ENCODE measurements at regions of chr12 and their contacts with region 1.

Region 1: GRCh38 chr12:58346032-58346632 is 404.8 kb downstream of the ATP23 start:
- DNase-seq: no peak
- H3K4me3 ChIP-seq: no peak overlapping the region
- H3K27ac ChIP-seq: no peak overlapping the region
- H3K4me1 ChIP-seq: no peaks in the 10 kb centered on the region
- H3K27me3 ChIP-seq: peaks cover 6% of the 10 kb centered on the region
- CTCF ChIP-seq: peak; percentile 58 to 92 (median 80)
- POLR2A ChIP-seq: no peak

Region 2: GRCh38 chr12:58443273-58443980 is 97.3 kb after region 1 on chr12:
- intact Hi-C with region 1: loop called in 1 of 2 experiments (anchors 10 kb)
- DNase-seq: peak in 6 of 7 donors; percentile 14 to 61 (median 28)
- H3K4me3 ChIP-seq: no peak overlapping the region
- H3K27ac ChIP-seq: no peak overlapping the region
- H3K4me1 ChIP-seq: no peaks in the 10 kb centered on the region
- H3K27me3 ChIP-seq: no peaks in the 10 kb centered on the region
- CTCF ChIP-seq: peak; percentile 21 to 60 (median 53)
- POLR2A ChIP-seq: no peak

Region 3: DNA sequence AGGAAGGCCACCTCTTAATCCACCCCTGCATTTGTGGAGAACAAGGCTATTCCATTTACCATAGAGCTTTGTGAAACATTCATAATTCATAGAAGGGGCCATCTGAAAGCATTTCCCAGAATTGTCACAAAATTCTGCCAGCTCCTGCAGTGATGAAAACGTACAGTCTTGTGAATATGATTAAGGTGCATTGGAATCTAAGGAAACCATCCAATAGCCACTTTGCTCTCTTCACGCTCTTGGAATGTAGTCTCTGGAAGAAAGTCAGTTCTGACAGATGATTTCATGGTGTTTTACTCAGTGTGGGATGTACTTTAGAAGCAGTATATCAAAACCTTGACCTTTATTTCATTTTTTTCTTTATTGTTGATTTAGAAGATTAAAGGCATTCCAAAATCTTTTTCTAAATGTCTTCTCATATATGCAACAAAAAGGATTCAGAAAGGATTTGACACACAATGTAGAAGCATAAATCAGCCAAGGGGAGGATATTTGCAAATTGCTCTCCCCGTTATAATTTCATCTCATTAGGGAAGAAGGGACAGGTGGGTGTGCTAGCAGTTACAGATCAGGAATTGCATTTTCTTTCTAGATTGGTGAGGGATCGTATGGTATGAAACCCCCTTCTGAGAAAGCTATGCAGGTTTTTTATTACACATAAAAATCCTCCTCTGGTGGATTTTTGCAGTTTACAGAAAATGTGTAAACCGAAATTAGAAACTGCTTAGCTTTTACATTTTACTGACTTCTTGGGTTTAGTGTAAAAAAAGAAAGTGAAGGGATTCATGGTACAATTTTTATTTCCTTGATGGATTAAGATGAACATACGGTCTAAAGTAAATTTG is 184.0 kb after region 1 on chr12:
- intact Hi-C with region 1: loop called in 1 of 2 experiments (anchors 10 kb)
- DNase-seq: peak in 2 of 7 donors; percentile 2 to 15
- H3K4me3 ChIP-seq: no peak overlapping the region
- H3K27ac ChIP-seq: no peak overlapping the region
- H3K4me1 ChIP-seq: peaks cover 4 to 17% of the 10 kb centered on the region in 2 donors
- H3K27me3 ChIP-seq: no peaks in the 10 kb centered on the region
- CTCF ChIP-seq: no peak
- POLR2A ChIP-seq: no peak

Region 4: GRCh38 chr12:59149997-59150642 is 804.0 kb after region 1 on chr12:
- intact Hi-C with region 1: loop called (anchors 5 to 10 kb)
- DNase-seq: peak in 5 of 7 donors; percentile 11 to 35 (median 22)
- H3K4me3 ChIP-seq: no peak overlapping the region
- H3K27ac ChIP-seq: no peak overlapping the region
- H3K4me1 ChIP-seq: no peaks in the 10 kb centered on the region
- H3K27me3 ChIP-seq: no peaks in the 10 kb centered on the region
- CTCF ChIP-seq: peak; percentile 60 to 99 (median 95)
- POLR2A ChIP-seq: no peak

Measured in adrenal gland (tissue), 19 donors.